ENCODE measurements at regions of chr16 and their contacts with region 1.

Region 1: GRCh38 chr16:67159593-67160406 is at the starts of genes FBXL8 and TRADD:
- DNase-seq: peak; percentile 90
- ATAC-seq: peak; percentile 69
- H3K4me3 ChIP-seq: peak within 1 kb of the TSS; percentile 67 to 98 (median 96)
- H3K4me3 Mint-ChIP-seq: peak within 1 kb of the TSS; percentile 92
- H3K27ac ChIP-seq: peak within 1 kb of the TSS; percentile 97 to 99
- H3K27ac Mint-ChIP-seq: peak within 1 kb of the TSS; percentile 97
- H3K4me1 ChIP-seq: peaks cover 61 to 76% of the 10 kb centered on the region in 2 donors
- H3K4me1 Mint-ChIP-seq: peaks cover 60% of the 10 kb centered on the region
- H3K27me3 ChIP-seq: peaks cover 0 to 44% (median 21%) of the 10 kb centered on the region in 4 experiments
- H3K27me3 Mint-ChIP-seq: peaks cover 19% of the 10 kb centered on the region
- CTCF ChIP-seq: peak; percentile 67
- total RNA-seq, gene FBXL8: 5.1 and 5.8 TPM in 2 replicates
- total RNA-seq, gene TRADD: 51.9 and 52.4 TPM in 2 replicates

Region 2: GRCh38 chr16:66947302-66948065 is 212.3 kb before region 1 on chr16:
- CTCF ChIA-PET with region 1: interaction called, 13 read pairs
- POLR2A ChIA-PET with region 1: no interaction called
- intact Hi-C with region 1: loop called (anchors 1 kb)
- DNase-seq: peak; percentile 86
- ATAC-seq: peak; percentile 90
- H3K4me3 ChIP-seq: peak overlapping the region; percentile 26 to 60 (median 49)
- H3K4me3 Mint-ChIP-seq: peak overlapping the region; percentile 93
- H3K27ac ChIP-seq: no peak overlapping the region
- H3K27ac Mint-ChIP-seq: no peak overlapping the region
- H3K4me1 ChIP-seq: peaks cover 15 to 23% of the 10 kb centered on the region in 2 donors
- H3K4me1 Mint-ChIP-seq: peaks cover 18% of the 10 kb centered on the region
- H3K27me3 ChIP-seq: peaks cover 0 to 35% (median 20%) of the 10 kb centered on the region in 4 experiments
- H3K27me3 Mint-ChIP-seq: peaks cover 40% of the 10 kb centered on the region
- CTCF ChIP-seq: peak; percentile 96

Region 3: GRCh38 chr16:66977341-66978113 is 182.3 kb before region 1 on chr16:
- CTCF ChIA-PET with region 1: interaction called, 20 read pairs
- POLR2A ChIA-PET with region 1: interaction called, 4 read pairs
- intact Hi-C with region 1: loop called (anchors 1 kb)
- DNase-seq: peak; percentile 87
- ATAC-seq: peak; percentile 98
- H3K4me3 ChIP-seq: no peak overlapping the region
- H3K4me3 Mint-ChIP-seq: no peak overlapping the region
- H3K27ac ChIP-seq: no peak overlapping the region
- H3K27ac Mint-ChIP-seq: peak overlapping the region; percentile 15
- H3K4me1 ChIP-seq: peaks cover 0 to 3% of the 10 kb centered on the region in 2 donors
- H3K4me1 Mint-ChIP-seq: peaks cover 1% of the 10 kb centered on the region
- H3K27me3 ChIP-seq: peaks cover 0 to 13% (median 0%) of the 10 kb centered on the region in 4 experiments
- H3K27me3 Mint-ChIP-seq: peaks cover 16% of the 10 kb centered on the region
- CTCF ChIP-seq: peak; percentile 93

Region 4: GRCh38 chr16:67028555-67029248 is 131.1 kb before region 1 on chr16 and contains the start of gene CBFB:
- CTCF ChIA-PET with region 1: interaction called, 7 read pairs
- POLR2A ChIA-PET with region 1: interaction called, 5 read pairs
- intact Hi-C with region 1: loop called (anchors 1 kb)
- DNase-seq: peak; percentile 97
- ATAC-seq: peak; percentile 83
- H3K4me3 ChIP-seq: peak within 1 kb of the TSS; percentile 69 to 82 (median 76)
- H3K4me3 Mint-ChIP-seq: peak within 1 kb of the TSS; percentile 94
- H3K27ac ChIP-seq: peak within 1 kb of the TSS; percentile 96 to 98
- H3K27ac Mint-ChIP-seq: peak within 1 kb of the TSS; percentile 94
- H3K4me1 ChIP-seq: peaks cover 13 to 18% of the 10 kb centered on the region in 2 donors
- H3K4me1 Mint-ChIP-seq: peaks cover 40% of the 10 kb centered on the region
- H3K27me3 ChIP-seq: no peaks in the 10 kb centered on the region
- H3K27me3 Mint-ChIP-seq: no peaks in the 10 kb centered on the region
- CTCF ChIP-seq: peak; percentile 21
- total RNA-seq, gene CBFB: 89.0 and 101 TPM in 2 replicates

Region 5: GRCh38 chr16:67173808-67174705 is 14.3 kb after region 1 on chr16:
- CTCF ChIA-PET with region 1: interaction called, 15 read pairs
- POLR2A ChIA-PET with region 1: interaction called, 4 read pairs
- intact Hi-C with region 1: no loop called
- DNase-seq: peak; percentile 72
- ATAC-seq: peak; percentile 80
- H3K4me3 ChIP-seq: peak overlapping the region in 4 of 5 experiments; percentile 25 to 59 (median 48)
- H3K4me3 Mint-ChIP-seq: peak overlapping the region; percentile 87
- H3K27ac ChIP-seq: no peak overlapping the region
- H3K27ac Mint-ChIP-seq: no peak overlapping the region
- H3K4me1 ChIP-seq: peaks cover 47 to 51% of the 10 kb centered on the region in 2 donors
- H3K4me1 Mint-ChIP-seq: peaks cover 39% of the 10 kb centered on the region
- H3K27me3 ChIP-seq: peaks cover 0 to 86% (median 53%) of the 10 kb centered on the region in 4 experiments
- H3K27me3 Mint-ChIP-seq: peaks cover 64% of the 10 kb centered on the region
- CTCF ChIP-seq: no peak

Region 6: GRCh38 chr16:67191995-67192681 is 32.3 kb after region 1 on chr16 and contains the start of gene E2F4:
- CTCF ChIA-PET with region 1: interaction called, 3 read pairs
- POLR2A ChIA-PET with region 1: no interaction called
- intact Hi-C with region 1: loop called (anchors 2 kb)
- DNase-seq: peak; percentile 93
- ATAC-seq: peak; percentile 96
- H3K4me3 ChIP-seq: peak within 1 kb of the TSS; percentile 54 to 98 (median 97)
- H3K4me3 Mint-ChIP-seq: peak within 1 kb of the TSS; percentile 92
- H3K27ac ChIP-seq: peak within 1 kb of the TSS; percentile 52 to 93
- H3K27ac Mint-ChIP-seq: peak within 1 kb of the TSS; percentile 92
- H3K4me1 ChIP-seq: peaks cover 22 to 28% of the 10 kb centered on the region in 2 donors
- H3K4me1 Mint-ChIP-seq: peaks cover 34% of the 10 kb centered on the region
- H3K27me3 ChIP-seq: peaks cover 0 to 17% (median under 1%) of the 10 kb centered on the region in 4 experiments
- H3K27me3 Mint-ChIP-seq: peaks cover 2% of the 10 kb centered on the region
- CTCF ChIP-seq: no peak
- total RNA-seq, gene E2F4: 104 and 106 TPM in 2 replicates

Region 7: DNA sequence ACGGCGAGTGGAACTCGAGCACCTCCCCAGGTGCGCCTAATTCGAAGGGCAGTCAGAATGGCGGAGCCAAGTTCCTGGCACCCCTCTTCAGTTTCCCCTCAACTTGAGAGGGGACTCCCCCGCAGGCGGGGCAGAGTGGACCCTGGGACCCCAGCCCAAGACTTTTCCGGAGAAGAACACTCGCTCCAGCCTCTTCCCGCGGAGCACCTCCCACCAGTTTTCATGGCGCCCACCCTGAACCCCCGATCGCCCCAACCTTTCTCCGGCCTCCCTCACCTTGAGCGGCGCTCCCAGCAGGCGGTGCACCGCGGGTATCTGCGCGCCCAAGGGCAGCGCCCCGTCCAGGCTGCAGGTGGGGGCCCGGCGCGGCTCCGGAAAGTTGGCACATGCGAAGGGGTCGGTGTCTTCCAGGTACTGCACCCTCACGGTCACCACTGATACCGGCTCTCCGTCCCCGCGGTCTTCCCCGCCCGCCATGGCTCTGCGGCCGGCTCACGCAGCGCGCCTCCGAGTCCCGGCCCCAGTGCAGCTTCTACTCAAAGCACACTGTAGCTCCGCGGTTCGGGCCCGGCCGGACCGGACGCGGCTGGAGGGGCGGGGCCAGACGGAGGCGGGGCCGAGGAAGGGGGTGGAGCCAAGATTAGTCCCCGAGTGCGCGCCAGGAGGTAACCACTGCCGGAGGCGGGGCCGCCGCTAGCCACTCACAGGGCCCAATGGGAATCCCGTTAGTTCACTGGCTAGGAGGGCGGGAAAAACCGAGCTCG is 87.3 kb after region 1 on chr16 and contains the start of gene FHOD1:
- CTCF ChIA-PET with region 1: interaction called, 6 read pairs
- POLR2A ChIA-PET with region 1: interaction called, 3 read pairs
- intact Hi-C with region 1: loop called (anchors 1 kb)
- DNase-seq: peak; percentile 96
- ATAC-seq: peak; percentile 75
- H3K4me3 ChIP-seq: peak within 1 kb of the TSS; percentile 70 to 97 (median 79)
- H3K4me3 Mint-ChIP-seq: peak within 1 kb of the TSS; percentile 96
- H3K27ac ChIP-seq: peak within 1 kb of the TSS; percentile 16 to 48
- H3K27ac Mint-ChIP-seq: peak within 1 kb of the TSS; percentile 90
- H3K4me1 ChIP-seq: peaks cover 46 to 55% of the 10 kb centered on the region in 2 donors
- H3K4me1 Mint-ChIP-seq: peaks cover 53% of the 10 kb centered on the region
- H3K27me3 ChIP-seq: peaks cover 0 to 17% (median 12%) of the 10 kb centered on the region in 4 experiments
- H3K27me3 Mint-ChIP-seq: peaks cover 9% of the 10 kb centered on the region
- CTCF ChIP-seq: no peak
- total RNA-seq, gene FHOD1: 46.9 and 47.3 TPM in 2 replicates

Measured in B cell (primary cell).